Activated T-helper 1 cell treated with anti-CD3 and anti-CD28 coated beads, Interleukin-12 subunit alpha, Interleukin-12 subunit beta, Interleukin-2, Interleukin-4 antibody, amounts not matched to agents 30 ng/mL and 10 ng/mL and 1 ng/mL, durations not matched to agents 14 hours and 24 hours and 36 hours (primary cell): ENCODE measurements at regions of chr6 and their contacts with region 1.

Region 1: DNA sequence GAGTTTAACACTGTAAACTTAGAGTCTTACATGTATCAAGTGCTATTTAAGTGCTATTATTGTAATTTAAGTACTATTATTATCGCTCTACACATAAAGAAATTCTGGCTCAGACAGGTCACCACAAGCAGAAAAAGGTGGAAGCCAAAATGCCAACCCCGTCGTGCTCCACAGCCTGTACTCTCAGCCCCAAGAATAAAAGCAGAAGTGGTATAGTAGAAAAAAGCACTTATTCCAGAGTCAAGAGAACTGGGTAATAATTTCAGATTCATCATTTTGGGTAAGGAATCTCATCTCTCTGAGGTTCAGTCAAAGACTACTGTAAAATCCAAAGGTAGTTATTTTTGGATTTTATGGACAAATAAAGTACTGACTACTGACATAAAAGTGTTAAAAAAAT is 943 bp downstream of the ZUP1 start:
- DNase-seq: no peak
- H3K4me3 Mint-ChIP-seq: peak overlapping the region; percentile 100
- H3K27ac Mint-ChIP-seq: peak overlapping the region; percentile 97
- H3K4me1 Mint-ChIP-seq: peaks cover 45% of the 10 kb centered on the region
- H3K27me3 Mint-ChIP-seq: peaks cover 6% of the 10 kb centered on the region

Region 2: DNA sequence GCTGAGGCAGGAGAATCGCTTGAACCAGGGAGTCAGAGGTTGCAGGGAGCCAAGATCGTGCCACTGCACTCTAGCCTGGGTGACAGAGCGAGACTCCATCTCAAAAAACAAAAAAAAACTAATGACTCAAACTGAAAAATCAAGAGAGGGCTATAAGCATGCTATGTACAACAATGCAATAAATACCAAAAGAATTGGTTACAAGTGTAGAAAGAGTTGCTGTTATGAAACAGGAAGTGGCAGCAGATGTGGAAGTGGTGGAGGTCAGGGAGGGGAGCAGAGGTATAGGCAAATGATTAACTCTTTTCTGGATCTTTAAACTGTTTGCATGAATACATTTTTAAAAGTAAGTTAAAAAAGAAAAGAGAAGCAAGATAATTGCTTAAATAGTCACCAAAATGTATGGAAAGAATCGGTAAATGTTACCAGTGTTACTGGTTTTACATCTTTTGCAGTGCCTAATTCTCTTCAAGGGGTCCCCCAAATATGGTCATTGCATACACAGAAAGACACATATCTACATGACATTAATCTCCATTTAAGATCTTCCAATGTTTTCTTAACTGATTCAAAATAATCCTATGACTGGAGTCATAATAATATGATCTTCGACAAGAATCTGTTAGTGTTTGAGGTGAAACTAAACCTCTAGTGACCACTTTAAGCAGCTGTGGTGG is 191.5 kb before region 1 on chr6:
- intact Hi-C with region 1: loop called (anchors 5 kb)
- DNase-seq: peak; percentile 54
- H3K4me3 Mint-ChIP-seq: peak overlapping the region; percentile 7
- H3K27ac Mint-ChIP-seq: peak overlapping the region; percentile 69
- H3K4me1 Mint-ChIP-seq: peaks cover 31% of the 10 kb centered on the region
- H3K27me3 Mint-ChIP-seq: peaks cover 11% of the 10 kb centered on the region

Region 3: GRCh38 chr6:116680975-116681808 is 13.6 kb after region 1 on chr6 and contains the start of gene KPNA5:
- intact Hi-C with region 1: loop called (anchors 1 kb)
- DNase-seq: peak; percentile 84
- H3K4me3 Mint-ChIP-seq: peak within 1 kb of the TSS; percentile 97
- H3K27ac Mint-ChIP-seq: peak within 1 kb of the TSS; percentile 97
- H3K4me1 Mint-ChIP-seq: peaks cover 25% of the 10 kb centered on the region
- H3K27me3 Mint-ChIP-seq: no peaks in the 10 kb centered on the region
- total RNA-seq, gene KPNA5: 6.1 and 7.6 TPM in 2 replicates

Region 4: DNA sequence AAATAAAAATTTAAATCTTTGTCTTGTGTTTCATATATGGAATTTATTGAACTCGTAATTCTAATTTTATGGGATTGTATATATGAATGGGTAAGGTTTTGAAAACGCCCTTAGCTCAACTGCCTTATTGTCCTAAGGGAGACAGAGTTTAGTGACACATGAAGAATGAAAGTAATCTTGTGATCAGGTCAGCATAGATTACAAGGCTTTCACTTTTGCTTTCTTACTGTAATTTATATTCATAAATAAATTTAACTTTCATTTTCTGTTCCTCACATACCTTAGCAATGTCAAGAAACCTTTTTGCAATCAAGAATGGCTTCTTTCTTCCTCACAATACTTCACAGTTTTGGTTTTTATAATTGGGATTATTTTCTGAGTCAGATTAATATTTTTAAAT is 27.8 kb after region 1 on chr6:
- intact Hi-C with region 1: loop called (anchors 1 kb)
- DNase-seq: no peak
- H3K4me3 Mint-ChIP-seq: no peak overlapping the region
- H3K27ac Mint-ChIP-seq: no peak overlapping the region
- H3K4me1 Mint-ChIP-seq: peaks cover 27% of the 10 kb centered on the region
- H3K27me3 Mint-ChIP-seq: no peaks in the 10 kb centered on the region